Activated T-helper 1 cell treated with anti-CD3 and anti-CD28 coated beads, Interleukin-12 subunit alpha, Interleukin-12 subunit beta, Interleukin-2, Interleukin-4 antibody, amounts not matched to agents 30 ng/mL and 10 ng/mL and 1 ng/mL, durations not matched to agents 14 hours and 24 hours and 36 hours (primary cell): ENCODE measurements at regions of chr15 and their contacts with region 1.

Region 1: GRCh38 chr15:94306700-94307650 is 75.6 kb downstream of the MCTP2 start:
- DNase-seq: peak; percentile 36
- H3K4me3 Mint-ChIP-seq: peak overlapping the region; percentile 38
- H3K27ac Mint-ChIP-seq: peak overlapping the region; percentile 98
- H3K4me1 Mint-ChIP-seq: peaks cover 79% of the 10 kb centered on the region
- H3K27me3 Mint-ChIP-seq: no peaks in the 10 kb centered on the region

Region 2: GRCh38 chr15:94174399-94174802 is 132.6 kb before region 1 on chr15:
- intact Hi-C with region 1: loop called (anchors 1 kb)
- DNase-seq: no peak
- H3K4me3 Mint-ChIP-seq: peak overlapping the region; percentile 38
- H3K27ac Mint-ChIP-seq: peak overlapping the region; percentile 85
- H3K4me1 Mint-ChIP-seq: peaks cover 58% of the 10 kb centered on the region
- H3K27me3 Mint-ChIP-seq: no peaks in the 10 kb centered on the region

Region 3: GRCh38 chr15:94206463-94207167 is 100.4 kb before region 1 on chr15:
- intact Hi-C with region 1: loop called (anchors 1 kb)
- DNase-seq: peak; percentile 69
- H3K4me3 Mint-ChIP-seq: peak overlapping the region; percentile 79
- H3K27ac Mint-ChIP-seq: peak overlapping the region; percentile 97
- H3K4me1 Mint-ChIP-seq: peaks cover 41% of the 10 kb centered on the region
- H3K27me3 Mint-ChIP-seq: no peaks in the 10 kb centered on the region

Region 4: GRCh38 chr15:94282269-94283250 is 24.4 kb before region 1 on chr15:
- intact Hi-C with region 1: loop called (anchors 1 kb)
- DNase-seq: no peak
- H3K4me3 Mint-ChIP-seq: peak overlapping the region; percentile 21
- H3K27ac Mint-ChIP-seq: peak overlapping the region; percentile 81
- H3K4me1 Mint-ChIP-seq: peaks cover 88% of the 10 kb centered on the region
- H3K27me3 Mint-ChIP-seq: no peaks in the 10 kb centered on the region

Region 5: DNA sequence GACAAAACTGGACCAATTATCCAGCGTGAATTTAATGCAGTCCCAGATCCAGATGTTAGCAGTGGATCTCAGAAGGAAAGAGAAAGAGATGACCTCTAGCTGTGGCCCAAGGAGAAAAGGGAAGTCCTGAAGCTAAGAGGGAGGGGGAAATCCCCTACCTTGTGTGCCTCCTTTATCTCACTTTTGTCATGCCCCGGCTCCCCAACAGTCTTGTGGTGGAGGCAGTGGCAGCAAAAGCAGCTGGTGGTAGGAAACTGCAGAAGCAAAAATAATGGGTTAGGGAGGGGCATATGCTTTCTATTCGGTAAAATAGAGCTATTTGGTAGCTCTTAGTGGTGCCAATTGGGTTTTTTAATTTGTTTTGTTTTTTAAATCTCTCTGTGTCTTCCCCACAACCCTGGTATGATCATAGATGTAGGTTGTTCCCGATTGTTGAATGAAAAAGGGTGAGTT is 19.2 kb before region 1 on chr15:
- intact Hi-C with region 1: loop called (anchors 1 kb)
- DNase-seq: peak; percentile 67
- H3K4me3 Mint-ChIP-seq: peak overlapping the region; percentile 80
- H3K27ac Mint-ChIP-seq: peak overlapping the region; percentile 91
- H3K4me1 Mint-ChIP-seq: peaks cover 75% of the 10 kb centered on the region
- H3K27me3 Mint-ChIP-seq: no peaks in the 10 kb centered on the region

Region 6: DNA sequence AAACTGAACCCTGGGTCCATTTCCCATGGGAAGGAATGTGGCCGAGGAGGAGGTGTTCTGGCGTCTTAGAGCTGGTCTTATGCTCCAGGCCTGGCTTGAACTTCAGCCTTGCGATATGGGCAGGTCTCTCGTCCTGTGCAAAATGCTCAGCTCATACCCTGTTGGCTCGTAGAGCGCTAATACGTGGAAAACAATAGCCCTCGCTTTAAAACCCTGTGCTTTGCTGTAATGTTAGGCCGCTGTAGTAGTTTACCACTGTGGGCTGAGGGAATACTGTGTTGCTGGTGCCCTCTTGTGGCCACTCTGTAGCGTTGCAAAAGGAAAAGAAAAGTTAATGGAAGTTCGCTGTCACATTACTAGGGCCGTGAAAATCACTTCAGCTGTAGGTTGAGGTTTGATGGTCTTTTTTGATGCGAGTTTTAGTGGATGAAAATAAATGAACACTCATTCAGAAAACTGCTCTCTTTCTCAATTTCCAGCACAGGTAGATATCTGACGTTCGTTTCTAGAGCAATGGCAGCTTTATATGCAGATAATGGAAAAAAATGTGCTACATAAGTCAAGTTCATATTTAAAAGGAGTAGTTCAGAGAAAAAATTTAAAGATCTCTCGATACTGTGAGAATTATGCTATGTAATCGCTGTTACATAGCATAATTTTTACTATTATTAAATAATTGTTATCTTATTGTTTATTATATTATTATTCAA is 17.3 kb after region 1 on chr15:
- intact Hi-C with region 1: loop called (anchors 2 kb)
- DNase-seq: peak; percentile 44
- H3K4me3 Mint-ChIP-seq: no peak overlapping the region
- H3K27ac Mint-ChIP-seq: no peak overlapping the region
- H3K4me1 Mint-ChIP-seq: peaks cover 48% of the 10 kb centered on the region
- H3K27me3 Mint-ChIP-seq: no peaks in the 10 kb centered on the region

Region 7: GRCh38 chr15:95051861-95052260 is 744.9 kb after region 1 on chr15:
- intact Hi-C with region 1: no loop called
- DNase-seq: no peak
- H3K4me3 Mint-ChIP-seq: no peak overlapping the region
- H3K27ac Mint-ChIP-seq: no peak overlapping the region
- H3K4me1 Mint-ChIP-seq: no peaks in the 10 kb centered on the region
- H3K27me3 Mint-ChIP-seq: no peaks in the 10 kb centered on the region